Posterior cingulate gyrus (tissue), 11 donors: ENCODE measurements at regions of chr1 and their contacts with region 1.

Region 1: DNA sequence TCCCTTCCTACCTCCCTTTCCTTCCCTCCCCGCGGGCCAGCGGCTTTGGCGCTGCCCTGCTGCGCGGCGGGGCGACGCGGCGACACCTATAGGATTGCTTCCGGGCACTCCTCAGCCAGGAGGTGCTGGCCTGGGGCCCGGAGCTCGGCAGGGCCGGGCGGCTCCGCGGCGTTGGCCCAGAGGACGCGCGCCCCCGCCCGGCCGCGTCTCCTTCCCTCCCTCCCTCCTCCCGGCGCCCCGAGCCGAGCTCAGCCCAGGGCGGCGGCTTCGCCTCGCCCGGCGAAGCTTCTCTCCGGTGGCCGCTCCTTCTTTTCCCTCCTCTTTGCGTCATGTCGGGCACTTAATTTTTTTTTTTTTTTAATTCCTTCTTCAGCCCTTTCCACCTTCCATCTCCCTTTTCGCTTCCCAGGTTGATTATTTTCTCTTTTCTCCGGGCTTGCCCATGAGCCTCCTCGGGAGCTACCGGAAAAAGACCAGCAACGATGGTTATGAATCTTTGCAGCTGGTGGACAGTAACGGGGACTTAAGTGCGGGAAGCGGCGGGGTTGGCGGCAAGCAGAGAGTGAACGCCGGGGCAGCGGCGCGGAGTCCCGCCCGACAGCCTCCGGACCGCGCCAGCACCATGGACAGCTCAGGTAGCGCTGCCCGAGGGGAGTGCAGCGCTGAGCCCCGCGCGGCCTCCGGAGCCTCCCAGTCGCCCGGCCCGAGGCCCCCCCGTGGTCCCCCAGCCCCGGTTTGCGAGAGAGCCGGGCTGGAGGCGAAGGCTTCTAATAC is at the start of gene DNAJC6:
- DNase-seq: peak; percentile 33 to 93 (median 62)

Region 2: GRCh38 chr1:65254319-65255034 is 55.0 kb before region 1 on chr1:
- intact Hi-C with region 1: loop called (anchors 10 kb)
- DNase-seq: peak; percentile 78 to 98 (median 87)

Region 3: GRCh38 chr1:65269612-65270011 is 39.9 kb before region 1 on chr1:
- intact Hi-C with region 1: loop called (anchors 5 kb)
- DNase-seq: no peak

Region 4: GRCh38 chr1:65372557-65372956 is 63.1 kb after region 1 on chr1:
- intact Hi-C with region 1: loop called (anchors 10 kb)
- DNase-seq: no peak

Region 5: GRCh38 chr1:65419681-65420589 is 110.4 kb after region 1 on chr1:
- intact Hi-C with region 1: loop called (anchors 5 kb)
- DNase-seq: peak; percentile 89 to 100 (median 96)

Region 6: DNA sequence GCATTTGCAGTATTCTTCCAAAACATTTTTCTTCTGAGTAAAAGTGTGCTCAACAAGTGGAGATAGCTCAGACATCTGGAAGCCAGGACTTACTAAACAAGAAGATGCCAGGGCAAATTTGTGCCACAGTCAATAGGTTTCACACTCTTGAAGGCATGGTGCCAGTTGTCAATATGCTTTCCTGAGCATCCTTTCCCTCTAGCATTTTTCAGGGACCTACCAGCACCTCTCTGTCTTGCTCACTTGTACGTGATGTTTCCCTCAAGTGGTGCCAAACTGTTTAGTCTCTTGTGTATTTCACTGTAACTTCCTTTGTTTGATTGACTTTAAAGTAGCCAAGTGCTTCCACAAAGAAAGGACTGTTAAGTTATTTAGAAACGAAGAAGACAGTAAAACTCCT is 1030.5 kb after region 1 on chr1:
- intact Hi-C with region 1: no loop called
- DNase-seq: no peak